Common myeloid progenitor, CD34-positive (primary cell): ENCODE measurements at regions of chr5 and their contacts with region 1.

Region 1: GRCh38 chr5:149618581-149619251 is 37.4 kb downstream of the ARHGEF37 start:
- DNase-seq: peak; percentile 43 to 67 (median 61)
- H3K4me3 ChIP-seq: no peak overlapping the region
- H3K27ac ChIP-seq: no peak overlapping the region
- H3K4me1 ChIP-seq: no peaks in the 10 kb centered on the region
- H3K27me3 ChIP-seq: no peaks in the 10 kb centered on the region

Region 2: GRCh38 chr5:149348518-149348917 is 270.2 kb before region 1 on chr5:
- CTCF ChIA-PET with region 1: no interaction called
- POLR2A ChIA-PET with region 1: no interaction called
- DNase-seq: no peak
- H3K4me3 ChIP-seq: no peak overlapping the region
- H3K27ac ChIP-seq: no peak overlapping the region
- H3K4me1 ChIP-seq: peaks cover 9 to 35% (median 25%) of the 10 kb centered on the region in 4 experiments
- H3K27me3 ChIP-seq: no peaks in the 10 kb centered on the region

Region 3: DNA sequence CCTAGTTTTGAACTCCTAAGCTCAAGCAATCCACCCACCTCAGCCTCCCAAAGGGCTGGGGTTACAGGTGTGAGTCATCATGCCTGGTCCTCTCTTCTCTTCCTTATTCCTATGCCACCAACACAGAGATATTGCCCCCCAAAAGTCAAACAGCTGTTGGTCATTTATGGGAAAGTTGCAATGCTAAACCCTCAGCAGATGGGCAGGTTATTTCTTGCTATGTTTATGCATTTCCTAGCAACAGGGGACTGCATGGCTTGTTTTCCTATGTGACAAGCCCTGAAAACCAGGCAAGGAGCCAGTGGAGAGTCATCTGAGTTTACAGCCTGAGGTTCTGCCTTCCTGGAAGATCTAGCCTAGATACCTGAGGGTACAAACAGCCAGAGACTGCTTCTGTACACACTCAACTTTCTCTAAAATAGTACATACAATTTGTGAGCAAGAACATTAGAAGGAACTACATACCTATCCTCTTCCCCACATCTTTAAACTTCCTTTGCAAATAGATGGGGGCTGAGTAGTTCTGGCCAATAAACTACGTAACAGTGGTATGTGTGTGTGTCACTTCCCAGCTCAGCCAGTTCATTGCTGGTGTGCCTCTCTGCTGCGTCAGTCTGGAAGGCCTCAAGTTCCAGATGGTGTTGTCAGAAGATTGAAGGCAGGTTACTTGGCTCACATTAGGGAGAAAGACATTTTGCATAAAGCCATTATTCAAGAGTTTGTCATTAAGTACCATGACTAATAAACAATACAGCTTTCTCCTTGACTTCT is 132.9 kb before region 1 on chr5:
- CTCF ChIA-PET with region 1: no interaction called
- POLR2A ChIA-PET with region 1: no interaction called
- DNase-seq: peak; percentile 77 to 96 (median 94)
- H3K4me3 ChIP-seq: no peak overlapping the region
- H3K27ac ChIP-seq: peak overlapping the region; percentile 56 to 86
- H3K4me1 ChIP-seq: peaks cover 0 to 38% (median 16%) of the 10 kb centered on the region in 4 experiments
- H3K27me3 ChIP-seq: no peaks in the 10 kb centered on the region

Region 4: DNA sequence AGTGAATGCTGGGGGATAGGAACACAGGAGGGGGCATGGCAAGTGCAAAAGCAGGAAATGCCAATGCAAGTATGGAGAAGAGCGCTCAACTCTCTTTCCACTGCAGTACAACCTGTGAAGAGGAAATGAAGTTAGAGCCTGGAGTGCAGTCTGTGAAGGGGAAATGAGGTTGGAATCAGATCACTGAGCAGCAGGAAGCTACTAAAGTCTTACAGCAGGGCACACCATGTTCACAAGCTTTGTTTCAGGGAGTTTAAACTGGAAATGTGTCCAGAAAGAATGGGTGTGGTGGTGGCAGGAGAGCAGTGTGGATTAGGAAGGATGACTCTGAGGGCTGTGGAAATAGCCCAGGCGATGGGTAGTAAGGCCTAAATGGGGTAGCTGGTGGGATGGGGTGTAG is 22.0 kb before region 1 on chr5:
- CTCF ChIA-PET with region 1: interaction called, 31 read pairs
- POLR2A ChIA-PET with region 1: no interaction called
- DNase-seq: peak in 2 of 3 donors; percentile 16 to 17
- H3K4me3 ChIP-seq: no peak overlapping the region
- H3K27ac ChIP-seq: no peak overlapping the region
- H3K4me1 ChIP-seq: no peaks in the 10 kb centered on the region
- H3K27me3 ChIP-seq: no peaks in the 10 kb centered on the region

Region 5: DNA sequence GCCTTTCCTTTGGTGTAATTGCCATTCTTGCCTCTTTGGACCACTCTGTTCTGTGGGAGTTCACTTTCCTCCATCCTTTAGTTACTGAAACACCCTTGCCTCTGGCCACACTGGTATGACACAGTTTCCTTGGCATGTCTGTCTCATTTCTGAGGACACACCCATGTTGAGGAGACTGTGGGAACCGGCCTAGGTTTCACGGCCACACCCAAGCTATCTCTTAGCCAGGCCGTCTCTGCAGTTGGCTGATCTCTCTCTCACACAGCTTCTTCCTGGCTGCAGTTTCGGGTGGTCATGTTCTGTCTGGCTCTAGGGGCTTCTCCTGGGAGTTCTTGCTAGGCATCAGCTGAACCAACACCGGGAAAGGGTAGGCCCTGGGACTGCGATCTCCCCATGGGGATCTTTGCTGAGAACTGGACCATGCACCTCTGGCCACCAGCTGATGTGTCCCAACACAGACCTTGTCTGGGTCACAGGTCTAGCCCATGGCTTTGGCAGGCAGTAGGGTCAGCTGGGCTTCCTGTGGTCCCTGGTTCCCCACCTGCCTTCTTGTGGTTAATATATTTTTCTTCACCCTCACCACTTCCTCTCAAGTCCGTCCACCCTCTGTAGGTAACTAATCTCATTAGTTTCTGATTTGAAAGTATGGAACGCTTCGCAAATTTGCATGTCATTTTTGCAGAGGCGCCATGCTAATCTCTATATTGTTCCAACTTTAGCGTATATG is 12.6 kb before region 1 on chr5:
- CTCF ChIA-PET with region 1: interaction called, 31 read pairs
- POLR2A ChIA-PET with region 1: no interaction called
- DNase-seq: peak; percentile 16 to 69 (median 48)
- H3K4me3 ChIP-seq: no peak overlapping the region
- H3K27ac ChIP-seq: no peak overlapping the region
- H3K4me1 ChIP-seq: peaks cover 0 to 8% (median 5%) of the 10 kb centered on the region in 4 experiments
- H3K27me3 ChIP-seq: no peaks in the 10 kb centered on the region